GM12878 (cell line): ENCODE measurements at regions of chr12 and their contacts with region 1.

Region 1: GRCh38 chr12:49121047-49121696 is 10.0 kb downstream of the TUBA1B start:
- DNase-seq: no peak
- ATAC-seq: peak; percentile 52
- H3K4me3 ChIP-seq: no peak overlapping the region
- H3K27ac ChIP-seq: no peak overlapping the region
- H3K4me1 ChIP-seq: no peaks in the 10 kb centered on the region
- H3K27me3 ChIP-seq: no peaks in the 10 kb centered on the region
- CTCF ChIP-seq: peak; percentile 25 to 61 (median 36); a peak in 4 of 6 replicates
- EP300 ChIP-seq: no peak
- POLR2A ChIP-seq: no peak
- RAD21 ChIP-seq: peak; percentile 49

Region 2: GRCh38 chr12:49069507-49070346 is 51.4 kb before region 1 on chr12 and contains the start of gene RHEBL1:
- CTCF ChIA-PET with region 1: interaction called, 10 read pairs
- POLR2A ChIA-PET with region 1: no interaction called
- RAD21 ChIA-PET with region 1: no interaction called
- SMC1A ChIA-PET with region 1: no interaction called
- in situ Hi-C with region 1: no loop called
- intact Hi-C with region 1: no loop called
- DNase-seq: peak; percentile 94
- ATAC-seq: peak; percentile 99
- H3K4me3 ChIP-seq: peak within 1 kb of the TSS; percentile 93
- H3K27ac ChIP-seq: peak within 1 kb of the TSS; percentile 91
- H3K4me1 ChIP-seq: peaks cover 4% of the 10 kb centered on the region
- H3K27me3 ChIP-seq: no peaks in the 10 kb centered on the region
- CTCF ChIP-seq: peak; percentile 33 to 37 (median 36); a peak in 4 of 6 replicates
- EP300 ChIP-seq: peak in 1 of 2 experiments; percentile 30; a peak in 1 of 4 replicates
- POLR2A ChIP-seq: peak; percentile 79
- RAD21 ChIP-seq: no peak
- polyA plus RNA-seq, gene RHEBL1: 17.9 to 18.7 TPM

Region 3: GRCh38 chr12:49110464-49111155 is 10.6 kb before region 1 on chr12 and contains the start of gene LMBR1L:
- CTCF ChIA-PET with region 1: interaction called, 17 read pairs
- POLR2A ChIA-PET with region 1: interaction called, 3 read pairs
- RAD21 ChIA-PET with region 1: no interaction called
- SMC1A ChIA-PET with region 1: interaction called, 8 read pairs
- in situ Hi-C with region 1: no loop called
- intact Hi-C with region 1: no loop called
- DNase-seq: peak; percentile 93
- ATAC-seq: peak; percentile 98
- H3K4me3 ChIP-seq: peak within 1 kb of the TSS; percentile 87
- H3K27ac ChIP-seq: peak within 1 kb of the TSS; percentile 70
- H3K4me1 ChIP-seq: peaks cover 9% of the 10 kb centered on the region
- H3K27me3 ChIP-seq: no peaks in the 10 kb centered on the region
- CTCF ChIP-seq: peak; percentile 36 to 60 (median 50); a peak in 5 of 6 replicates
- EP300 ChIP-seq: no peak
- POLR2A ChIP-seq: peak; percentile 91
- RAD21 ChIP-seq: 0 out of 2 replicates have a peak, but pooled peaks have one; percentile 32
- polyA plus RNA-seq, gene LMBR1L: 2.1 to 2.8 TPM